Heart left ventricle (tissue), 16 donors: ENCODE measurements at regions of chr1 and their contacts with region 1.

Region 1: DNA sequence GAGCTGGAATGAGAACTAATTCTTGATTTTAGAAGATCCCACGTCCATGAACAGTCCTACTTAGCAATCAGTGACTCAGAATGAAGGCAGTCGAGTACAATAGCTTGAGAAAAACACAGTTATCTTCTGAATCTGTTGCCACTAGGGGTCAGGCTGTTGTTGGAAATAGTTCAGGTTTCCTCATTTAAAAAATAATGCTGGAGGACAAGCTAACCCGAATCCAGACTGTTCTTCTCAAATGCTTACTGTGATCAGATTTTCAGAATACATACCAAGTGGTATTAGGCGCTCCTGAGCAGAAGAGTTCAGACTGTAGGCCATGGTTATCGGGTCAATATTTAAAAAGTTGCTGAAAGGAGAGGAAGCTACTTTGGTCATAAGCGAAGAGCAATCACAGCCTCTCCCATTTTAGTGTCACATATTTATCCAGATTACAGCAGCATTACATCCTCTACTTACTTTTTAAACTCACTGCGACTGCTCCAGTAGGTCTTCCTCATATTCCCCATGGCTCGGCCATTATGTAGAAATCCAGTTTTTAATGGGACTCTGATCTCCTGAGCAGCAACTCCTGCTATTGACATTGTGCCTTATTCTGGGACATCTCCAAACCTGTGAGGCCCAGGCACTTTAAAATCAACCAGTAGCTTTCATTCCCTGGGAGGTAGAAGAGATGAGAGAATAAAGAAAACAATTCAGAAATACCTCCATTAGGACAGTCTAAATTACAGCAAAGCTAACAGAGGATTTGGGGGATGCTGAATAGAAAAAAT is 10.9 kb downstream of the ERRFI1 start:
- DNase-seq: peak in 2 of 5 donors; percentile 51 to 56
- ATAC-seq: peak; percentile 43 to 85 (median 76)
- H3K4me3 ChIP-seq: no peak overlapping the region
- H3K27ac ChIP-seq: peak overlapping the region in 11 of 12 donors; percentile 5 to 70 (median 23)
- H3K4me1 ChIP-seq: peaks cover 0 to 48% (median 35%) of the 10 kb centered on the region in 12 donors
- H3K27me3 ChIP-seq: no peaks in the 10 kb centered on the region
- CTCF ChIP-seq: peak; percentile 38 to 75 (median 63)
- POLR2A ChIP-seq: no peak

Region 2: DNA sequence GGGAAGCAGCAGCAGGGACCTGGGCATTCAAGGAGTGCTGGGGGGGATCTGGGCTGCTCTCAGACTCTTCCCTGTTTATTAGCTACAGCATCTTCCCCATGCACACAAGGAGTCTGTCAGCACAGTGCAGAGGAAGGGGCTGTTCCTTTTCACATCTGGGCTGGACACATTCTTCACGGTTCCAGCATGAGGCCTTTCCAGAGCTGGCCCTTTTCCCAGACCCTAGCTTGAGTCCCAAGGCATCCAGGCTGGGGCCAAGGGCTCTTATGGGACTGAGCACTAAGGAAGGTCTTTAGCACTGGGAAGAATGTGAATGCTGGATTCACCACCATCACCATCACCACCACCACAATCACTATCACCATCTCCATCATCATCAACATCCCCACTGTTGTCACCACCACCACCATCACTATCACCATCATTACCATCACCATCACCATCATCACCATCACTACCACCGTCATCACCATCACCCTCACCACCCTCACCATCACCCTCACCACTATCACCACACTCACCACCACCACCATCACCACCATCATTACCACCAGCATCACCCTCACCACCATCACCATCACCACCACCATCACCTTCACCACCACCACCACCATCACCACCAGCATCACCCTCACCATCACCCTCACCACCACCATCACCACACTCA is 25.3 kb before region 1 on chr1:
- intact Hi-C with region 1: loop called in 1 of 10 experiments (anchors 5 kb)
- DNase-seq: no peak
- ATAC-seq: peak; percentile 26 to 38 (median 30)
- H3K4me3 ChIP-seq: no peak overlapping the region
- H3K27ac ChIP-seq: no peak overlapping the region
- H3K4me1 ChIP-seq: peaks cover 0 to 14% (median 0%) of the 10 kb centered on the region in 12 donors
- H3K27me3 ChIP-seq: no peaks in the 10 kb centered on the region
- CTCF ChIP-seq: no peak
- POLR2A ChIP-seq: no peak

Region 3: GRCh38 chr1:8061210-8061609 is 46.0 kb after region 1 on chr1:
- intact Hi-C with region 1: no loop called
- DNase-seq: no peak
- ATAC-seq: peak; percentile 47 to 83 (median 60)
- H3K4me3 ChIP-seq: no peak overlapping the region
- H3K27ac ChIP-seq: peak overlapping the region in 5 of 12 donors; percentile 24 to 64 (median 43)
- H3K4me1 ChIP-seq: peaks cover 0 to 16% (median 0%) of the 10 kb centered on the region in 12 donors
- H3K27me3 ChIP-seq: no peaks in the 10 kb centered on the region
- CTCF ChIP-seq: no peak
- POLR2A ChIP-seq: no peak

Region 4: GRCh38 chr1:8348777-8349491 is 333.7 kb after region 1 on chr1:
- intact Hi-C with region 1: loop called in 4 of 10 experiments (anchors 5 to 10 kb)
- DNase-seq: peak in 3 of 5 donors; percentile 66 to 75 (median 73)
- ATAC-seq: peak in 3 of 4 donors; percentile 42 to 61 (median 49)
- H3K4me3 ChIP-seq: no peak overlapping the region
- H3K27ac ChIP-seq: peak overlapping the region in 1 of 12 donors; percentile 65
- H3K4me1 ChIP-seq: peaks cover 0 to 50% (median 26%) of the 10 kb centered on the region in 12 donors
- H3K27me3 ChIP-seq: no peaks in the 10 kb centered on the region
- CTCF ChIP-seq: peak; percentile 76 to 91 (median 84)
- POLR2A ChIP-seq: no peak

Region 5: GRCh38 chr1:8396786-8397406 is 381.7 kb after region 1 on chr1:
- intact Hi-C with region 1: no loop called
- DNase-seq: peak in 2 of 5 donors; percentile 51 to 67
- ATAC-seq: peak; percentile 90 to 96 (median 94)
- H3K4me3 ChIP-seq: peak overlapping the region in 1 of 12 donors; percentile 4
- H3K27ac ChIP-seq: peak overlapping the region; percentile 69 to 87 (median 79)
- H3K4me1 ChIP-seq: peaks cover 15 to 84% (median 65%) of the 10 kb centered on the region in 12 donors
- H3K27me3 ChIP-seq: no peaks in the 10 kb centered on the region
- CTCF ChIP-seq: peak in 1 of 12 donors; percentile 9
- POLR2A ChIP-seq: no peak